ENCODE measurements at regions of chr12 and their contacts with region 1.

Region 1: DNA sequence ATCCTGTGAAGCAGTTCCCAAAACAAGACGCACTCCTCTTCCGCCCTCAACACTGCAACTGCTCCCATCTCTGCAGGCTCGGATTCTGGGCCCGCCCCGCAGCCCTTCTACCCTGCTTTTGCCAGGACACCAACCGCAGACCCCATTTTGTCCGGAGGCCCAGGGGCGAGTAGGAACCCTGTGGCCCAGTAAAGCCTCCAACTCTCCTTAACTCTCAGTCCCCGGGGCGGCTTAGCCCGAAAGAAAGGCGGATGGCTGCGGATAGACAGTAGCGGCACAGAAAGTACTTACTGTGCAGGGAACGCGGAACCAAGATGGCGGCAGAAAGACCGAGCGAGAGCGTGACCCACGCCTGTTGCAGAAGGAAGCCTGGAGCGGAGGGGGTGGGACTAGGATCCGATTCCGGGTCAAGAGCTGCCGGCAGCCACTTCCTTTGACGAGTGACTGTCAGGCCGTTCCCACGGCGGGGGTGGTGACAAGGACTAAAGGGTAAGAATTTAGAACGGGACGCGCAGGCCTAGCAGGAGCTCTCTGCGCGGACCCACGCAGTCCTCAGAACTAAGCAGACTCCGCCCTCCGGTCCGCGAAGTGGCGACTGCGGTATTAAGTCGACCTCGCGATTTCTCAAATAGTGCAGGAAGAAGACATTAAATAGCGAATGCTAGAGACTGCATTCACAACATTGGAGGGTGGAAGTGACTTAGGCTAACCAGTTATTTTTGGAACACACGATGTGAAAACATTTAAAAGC is at the start of gene NACA:
- DNase-seq: peak; percentile 99
- ATAC-seq: peak; percentile 85 to 87
- H3K4me3 ChIP-seq: peak within 1 kb of the TSS; percentile 78 to 99 (median 84)
- H3K27ac ChIP-seq: peak within 1 kb of the TSS; percentile 95 to 98 (median 96)
- H3K4me1 ChIP-seq: peaks cover 33 to 43% of the 10 kb centered on the region in 2 donors
- H3K27me3 ChIP-seq: no peaks in the 10 kb centered on the region
- CTCF ChIP-seq: no peak
- POLR2A ChIP-seq: peak; percentile 97 to 98
- total RNA-seq, gene NACA: 225 to 438 (median 398) TPM

Region 2: GRCh38 chr12:56645717-56646446 is 79.3 kb before region 1 on chr12 and contains the start of gene ATP5F1B:
- in situ Hi-C with region 1: loop called in 1 of 4 experiments (anchors 10 kb)
- intact Hi-C with region 1: loop called (anchors 1 kb)
- DNase-seq: peak; percentile 98 to 99
- ATAC-seq: peak; percentile 99 to 100
- H3K4me3 ChIP-seq: peak within 1 kb of the TSS; percentile 66 to 99 (median 94)
- H3K27ac ChIP-seq: peak within 1 kb of the TSS; percentile 92 to 99 (median 95)
- H3K4me1 ChIP-seq: peaks cover 27 to 32% of the 10 kb centered on the region in 2 donors
- H3K27me3 ChIP-seq: no peaks in the 10 kb centered on the region
- CTCF ChIP-seq: no peak
- POLR2A ChIP-seq: peak; percentile 96 to 99
- total RNA-seq, gene ATP5F1B: 779 to 1,310 (median 926) TPM

Region 3: DNA sequence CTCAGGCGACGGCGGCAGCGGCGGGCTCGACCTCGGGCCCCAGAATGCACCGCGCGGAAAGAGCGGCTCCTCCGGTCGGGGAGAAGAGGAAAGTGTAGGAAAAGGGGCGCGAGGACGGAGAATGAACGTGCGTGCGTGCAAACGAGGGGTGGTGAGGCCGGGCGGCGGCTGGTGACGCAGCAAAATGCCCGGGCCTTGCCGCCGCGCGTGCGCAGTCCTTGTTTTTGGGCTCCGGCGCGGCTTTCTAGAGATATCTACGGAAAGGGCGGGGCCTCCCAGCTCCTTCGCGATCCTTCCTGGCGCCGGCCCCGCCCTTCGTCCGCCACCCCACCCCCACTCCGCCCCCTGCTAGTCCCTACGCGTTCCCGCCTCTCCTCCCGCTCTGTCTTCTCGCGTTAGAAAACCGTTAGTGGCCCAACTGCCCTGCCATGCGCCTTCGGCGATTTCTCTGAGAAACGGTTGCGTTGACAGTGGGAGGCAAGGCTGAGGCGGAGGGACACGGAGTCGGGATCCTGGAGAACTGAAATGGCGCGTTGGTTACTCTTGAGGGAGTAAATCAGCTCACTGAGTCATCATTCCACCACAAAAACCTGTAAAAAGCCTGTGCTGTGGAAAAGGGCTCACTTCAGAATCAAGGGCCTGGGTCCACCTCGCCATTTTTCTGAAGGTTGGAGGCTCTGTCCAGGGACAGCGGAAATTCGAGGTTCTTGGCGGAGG is 36.9 kb before region 1 on chr12 and contains the start of gene PTGES3:
- in situ Hi-C with region 1: no loop called
- intact Hi-C with region 1: loop called (anchors 1 kb)
- DNase-seq: peak; percentile 96 to 97
- ATAC-seq: peak; percentile 88 to 89
- H3K4me3 ChIP-seq: peak within 1 kb of the TSS; percentile 84 to 95 (median 90)
- H3K27ac ChIP-seq: peak within 1 kb of the TSS; percentile 97 to 99 (median 98)
- H3K4me1 ChIP-seq: peaks cover 33 to 41% of the 10 kb centered on the region in 2 donors
- H3K27me3 ChIP-seq: no peaks in the 10 kb centered on the region
- CTCF ChIP-seq: no peak
- POLR2A ChIP-seq: peak; percentile 96 to 97
- total RNA-seq, gene PTGES3: 57.2 to 81.4 (median 69.3) TPM

Region 4: DNA sequence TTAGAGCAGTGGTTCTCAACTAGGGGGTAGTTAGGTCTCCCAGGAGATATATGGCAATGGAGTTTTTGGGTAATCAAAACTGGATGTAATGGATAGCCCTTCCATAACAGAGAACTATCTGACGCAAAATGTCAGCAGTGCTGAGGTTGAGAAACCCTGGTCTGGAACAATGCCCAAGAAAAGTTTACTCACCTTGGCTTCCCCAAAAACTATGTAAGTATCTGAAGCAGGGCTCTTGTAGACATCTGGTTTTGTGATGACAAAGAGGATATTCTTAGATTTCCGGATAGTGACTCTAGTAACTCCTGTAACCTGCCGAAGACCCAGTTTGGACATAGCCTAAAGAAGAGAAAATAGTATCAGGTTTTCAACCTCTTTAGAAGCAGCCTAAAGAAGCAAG is 11.8 kb before region 1 on chr12:
- in situ Hi-C with region 1: no loop called
- intact Hi-C with region 1: loop called (anchors 1 kb)
- DNase-seq: peak in 1 of 2 donors; percentile 37
- ATAC-seq: peak; percentile 69 to 79
- H3K4me3 ChIP-seq: no peak overlapping the region
- H3K27ac ChIP-seq: peak overlapping the region; percentile 80 to 97 (median 95)
- H3K4me1 ChIP-seq: peaks cover 52 to 61% of the 10 kb centered on the region in 2 donors
- H3K27me3 ChIP-seq: no peaks in the 10 kb centered on the region
- CTCF ChIP-seq: no peak
- POLR2A ChIP-seq: no peak